Calu3 (cell line): ENCODE measurements at regions of chr2 and their contacts with region 1.

Region 1: GRCh38 chr2:216698895-216699294 is 3.5 kb upstream of the IGFBP5 start:
- DNase-seq: peak; percentile 41
- H3K4me3 Mint-ChIP-seq: no peak overlapping the region
- H3K27ac Mint-ChIP-seq: no peak overlapping the region
- H3K4me1 Mint-ChIP-seq: peaks cover 39% of the 10 kb centered on the region
- H3K27me3 Mint-ChIP-seq: no peaks in the 10 kb centered on the region
- CTCF ChIP-seq: peak; percentile 72

Region 2: GRCh38 chr2:216498418-216499413 is 200.2 kb before region 1 on chr2 and contains the start of gene RPL37A:
- CTCF ChIA-PET with region 1: no interaction called
- intact Hi-C with region 1: no loop called
- DNase-seq: peak; percentile 91
- H3K4me3 Mint-ChIP-seq: peak within 1 kb of the TSS; percentile 100
- H3K27ac Mint-ChIP-seq: peak within 1 kb of the TSS; percentile 100
- H3K4me1 Mint-ChIP-seq: peaks cover 27% of the 10 kb centered on the region
- H3K27me3 Mint-ChIP-seq: no peaks in the 10 kb centered on the region
- CTCF ChIP-seq: no peak
- total RNA-seq, gene RPL37A: 1,797 and 1,889 TPM in 2 replicates

Region 3: DNA sequence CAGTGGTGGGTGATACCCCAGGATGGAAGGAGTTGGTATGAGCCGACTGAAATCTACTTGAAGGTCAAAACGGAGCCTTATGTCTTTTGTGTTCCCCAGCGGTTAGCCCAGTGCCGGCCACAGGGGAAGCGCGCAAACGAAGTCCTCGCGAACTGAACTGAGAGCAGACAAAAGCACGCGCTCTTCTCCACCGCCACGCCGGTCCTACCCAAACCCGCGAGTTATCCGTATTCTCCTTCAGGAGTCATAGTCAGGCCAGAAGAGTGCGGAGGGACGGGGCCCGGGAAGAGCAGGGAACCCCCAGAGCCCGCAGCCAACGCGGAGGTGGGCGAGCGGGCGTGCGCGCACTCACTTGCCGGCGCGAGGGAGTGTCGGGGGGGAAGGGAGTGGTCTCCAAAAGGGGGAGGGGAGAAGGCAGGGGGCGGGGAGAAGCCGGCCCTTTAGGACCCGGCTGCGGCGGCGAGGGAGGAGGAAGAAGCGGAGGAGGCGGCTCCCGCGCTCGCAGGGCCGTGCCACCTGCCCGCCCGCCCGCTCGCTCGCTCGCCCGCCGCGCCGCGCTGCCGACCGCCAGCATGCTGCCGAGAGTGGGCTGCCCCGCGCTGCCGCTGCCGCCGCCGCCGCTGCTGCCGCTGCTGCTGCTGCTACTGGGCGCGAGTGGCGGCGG is 65.8 kb before region 1 on chr2 and contains the start of gene IGFBP2:
- CTCF ChIA-PET with region 1: no interaction called
- intact Hi-C with region 1: no loop called
- DNase-seq: peak; percentile 63
- H3K4me3 Mint-ChIP-seq: peak within 1 kb of the TSS; percentile 97
- H3K27ac Mint-ChIP-seq: peak within 1 kb of the TSS; percentile 58
- H3K4me1 Mint-ChIP-seq: peaks cover 51% of the 10 kb centered on the region
- H3K27me3 Mint-ChIP-seq: peaks cover 60% of the 10 kb centered on the region
- CTCF ChIP-seq: no peak
- total RNA-seq, gene IGFBP2: 164 and 175 TPM in 2 replicates

Region 4: DNA sequence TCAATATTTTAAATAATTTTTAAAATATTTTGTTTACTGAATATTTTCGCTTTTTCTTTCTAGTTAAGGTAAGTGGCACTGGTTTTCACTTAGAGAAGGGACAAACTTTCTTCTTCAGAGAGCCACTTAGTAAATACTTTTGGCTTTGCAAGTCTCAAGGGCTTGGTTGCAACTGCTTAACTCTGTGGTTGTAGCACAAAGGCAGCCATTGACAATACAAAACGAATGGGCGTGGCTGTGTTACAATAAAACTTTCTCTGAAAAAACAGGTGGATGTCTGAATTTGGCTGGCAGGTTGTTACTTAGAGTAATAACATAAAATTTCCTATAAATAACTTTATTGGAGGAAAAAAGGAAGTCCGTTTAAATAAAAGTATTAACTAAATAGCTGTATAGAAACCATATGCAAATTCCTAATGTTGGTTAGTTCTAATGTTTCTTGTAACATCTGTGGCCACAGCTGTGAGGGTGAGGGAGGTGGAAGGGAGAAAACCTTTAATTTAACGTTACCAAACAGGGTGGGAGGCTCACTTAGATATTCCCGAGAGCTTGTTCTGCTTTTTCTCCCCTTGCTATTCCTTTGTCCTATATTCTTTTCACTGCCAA is 223.4 kb after region 1 on chr2:
- CTCF ChIA-PET with region 1: no interaction called
- intact Hi-C with region 1: no loop called
- DNase-seq: no peak
- H3K4me3 Mint-ChIP-seq: no peak overlapping the region
- H3K27ac Mint-ChIP-seq: no peak overlapping the region
- H3K4me1 Mint-ChIP-seq: no peaks in the 10 kb centered on the region
- H3K27me3 Mint-ChIP-seq: no peaks in the 10 kb centered on the region
- CTCF ChIP-seq: no peak

Region 5: DNA sequence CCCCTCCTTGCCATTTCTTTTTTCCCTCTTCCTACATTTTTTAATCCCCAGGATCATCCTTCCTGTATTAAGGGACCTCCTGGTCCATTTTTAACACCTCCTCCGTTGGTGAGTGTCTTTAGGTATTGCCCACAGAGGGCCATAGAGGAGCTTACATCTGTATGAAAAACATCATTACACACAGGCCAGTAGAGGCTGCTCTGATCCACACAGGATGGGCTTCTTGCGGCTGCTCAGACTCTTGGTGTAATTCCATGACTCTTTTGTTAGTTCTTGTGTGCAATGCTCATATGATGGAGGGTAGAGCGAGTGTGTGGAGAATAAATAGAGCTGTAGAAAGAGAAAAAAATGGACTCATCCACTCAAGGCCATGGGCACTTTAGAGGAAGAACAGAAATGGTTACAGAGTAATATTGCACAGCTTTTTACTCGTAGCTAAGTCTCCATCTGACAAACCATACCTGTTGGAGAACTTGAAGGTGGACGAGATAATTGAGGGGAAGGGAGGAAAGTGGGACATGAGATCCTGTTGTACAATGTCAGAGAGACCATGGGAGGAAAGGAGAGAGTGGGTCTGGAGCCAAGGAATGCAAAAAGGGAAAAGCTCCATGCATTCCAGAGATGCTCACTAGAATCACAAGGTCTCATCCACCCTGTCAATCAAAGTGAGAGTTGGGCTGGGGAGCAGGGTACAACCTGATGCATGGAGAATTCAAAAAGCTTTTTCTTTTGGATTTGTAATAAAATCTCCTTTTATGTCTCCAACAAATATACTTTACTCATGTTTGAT is 290.6 kb after region 1 on chr2:
- CTCF ChIA-PET with region 1: no interaction called
- intact Hi-C with region 1: loop called (anchors 10 kb)
- DNase-seq: no peak
- H3K4me3 Mint-ChIP-seq: no peak overlapping the region
- H3K27ac Mint-ChIP-seq: no peak overlapping the region
- H3K4me1 Mint-ChIP-seq: no peaks in the 10 kb centered on the region
- H3K27me3 Mint-ChIP-seq: no peaks in the 10 kb centered on the region
- CTCF ChIP-seq: no peak

Region 6: GRCh38 chr2:217151509-217152206 is 452.8 kb after region 1 on chr2:
- CTCF ChIA-PET with region 1: no interaction called
- intact Hi-C with region 1: no loop called
- DNase-seq: no peak
- H3K4me3 Mint-ChIP-seq: no peak overlapping the region
- H3K27ac Mint-ChIP-seq: no peak overlapping the region
- H3K4me1 Mint-ChIP-seq: no peaks in the 10 kb centered on the region
- H3K27me3 Mint-ChIP-seq: no peaks in the 10 kb centered on the region
- CTCF ChIP-seq: no peak

Region 7: GRCh38 chr2:217166241-217166850 is 467.5 kb after region 1 on chr2:
- CTCF ChIA-PET with region 1: interaction called, 16 read pairs
- intact Hi-C with region 1: no loop called
- DNase-seq: peak; percentile 25
- H3K4me3 Mint-ChIP-seq: no peak overlapping the region
- H3K27ac Mint-ChIP-seq: peak overlapping the region; percentile 47
- H3K4me1 Mint-ChIP-seq: peaks cover 31% of the 10 kb centered on the region
- H3K27me3 Mint-ChIP-seq: no peaks in the 10 kb centered on the region
- CTCF ChIP-seq: peak; percentile 43

Region 8: GRCh38 chr2:217331523-217332139 is 632.7 kb after region 1 on chr2:
- CTCF ChIA-PET with region 1: no interaction called
- intact Hi-C with region 1: loop called (anchors 2 kb)
- DNase-seq: peak; percentile 83
- H3K4me3 Mint-ChIP-seq: peak overlapping the region; percentile 24
- H3K27ac Mint-ChIP-seq: peak overlapping the region; percentile 97
- H3K4me1 Mint-ChIP-seq: peaks cover 84% of the 10 kb centered on the region
- H3K27me3 Mint-ChIP-seq: no peaks in the 10 kb centered on the region
- CTCF ChIP-seq: no peak

Region 9: GRCh38 chr2:217650716-217651360 is 951.9 kb after region 1 on chr2:
- CTCF ChIA-PET with region 1: no interaction called
- intact Hi-C with region 1: loop called (anchors 5 kb)
- DNase-seq: peak; percentile 74
- H3K4me3 Mint-ChIP-seq: peak overlapping the region; percentile 2
- H3K27ac Mint-ChIP-seq: peak overlapping the region; percentile 40
- H3K4me1 Mint-ChIP-seq: peaks cover 40% of the 10 kb centered on the region
- H3K27me3 Mint-ChIP-seq: peaks cover under 1% of the 10 kb centered on the region
- CTCF ChIP-seq: peak; percentile 74